Common myeloid progenitor, CD34-positive (primary cell): ENCODE measurements at regions of chr22 and their contacts with region 1.

Region 1: DNA sequence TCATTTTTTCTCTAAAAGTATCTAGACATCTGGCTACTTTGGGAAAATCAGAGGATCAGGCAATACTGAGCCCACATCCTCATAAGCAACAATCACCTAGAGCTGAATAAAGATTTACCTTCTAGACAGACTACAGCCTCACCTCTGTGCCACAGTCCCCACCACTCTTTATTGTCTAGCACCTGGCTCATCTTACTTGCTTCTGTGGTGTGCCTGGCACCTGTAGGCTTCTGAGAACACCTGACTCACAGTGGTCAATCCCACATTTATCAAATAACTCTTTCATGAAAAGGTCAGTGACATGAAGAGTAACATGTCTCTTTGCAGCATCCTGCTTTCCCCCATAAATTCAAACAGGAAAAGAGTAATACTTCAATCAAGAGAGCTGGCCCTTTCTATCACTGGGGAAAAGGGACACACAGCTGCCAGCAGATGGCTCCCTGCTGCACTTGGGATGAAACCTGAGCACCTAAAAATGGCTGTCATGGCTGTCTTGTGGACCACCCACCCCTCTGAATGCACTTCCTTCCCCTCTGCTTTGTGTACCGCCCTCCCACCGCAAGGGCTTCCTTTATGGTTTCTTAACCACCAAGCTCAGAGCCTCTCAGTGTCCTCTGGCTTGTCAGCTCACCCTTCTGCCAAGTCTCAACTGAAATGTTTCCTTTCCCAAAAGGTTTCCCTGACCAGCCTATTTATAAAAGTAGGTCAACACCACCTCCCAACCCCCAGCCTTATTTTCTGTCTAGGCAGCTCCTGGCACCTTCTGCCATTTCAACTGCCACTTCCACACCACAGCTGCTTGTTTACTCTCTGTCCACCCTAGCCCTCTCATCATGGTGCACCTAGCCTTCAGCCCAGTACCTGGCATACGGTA is 9.3 kb downstream of the TFIP11 start:
- DNase-seq: peak; percentile 95 to 97 (median 97)
- H3K4me3 ChIP-seq: peak overlapping the region in 6 of 7 experiments; percentile 1 to 55 (median 48)
- H3K27ac ChIP-seq: no peak overlapping the region
- H3K4me1 ChIP-seq: peaks cover 11 to 26% (median 22%) of the 10 kb centered on the region in 4 experiments
- H3K27me3 ChIP-seq: no peaks in the 10 kb centered on the region

Region 2: GRCh38 chr22:26470807-26471206 is 32.1 kb before region 1 on chr22:
- CTCF ChIA-PET with region 1: no interaction called
- POLR2A ChIA-PET with region 1: no interaction called
- DNase-seq: no peak
- H3K4me3 ChIP-seq: no peak overlapping the region
- H3K27ac ChIP-seq: no peak overlapping the region
- H3K4me1 ChIP-seq: peaks cover 0 to 6% (median 1%) of the 10 kb centered on the region in 4 experiments
- H3K27me3 ChIP-seq: no peaks in the 10 kb centered on the region

Region 3: GRCh38 chr22:26492220-26492619 is 10.7 kb before region 1 on chr22:
- CTCF ChIA-PET with region 1: interaction called, 19 read pairs
- POLR2A ChIA-PET with region 1: interaction called, 4 read pairs
- DNase-seq: no peak
- H3K4me3 ChIP-seq: no peak overlapping the region
- H3K27ac ChIP-seq: no peak overlapping the region
- H3K4me1 ChIP-seq: no peaks in the 10 kb centered on the region
- H3K27me3 ChIP-seq: no peaks in the 10 kb centered on the region

Region 4: GRCh38 chr22:26665813-26666231 is 162.9 kb after region 1 on chr22:
- CTCF ChIA-PET with region 1: interaction called, 33 read pairs
- POLR2A ChIA-PET with region 1: no interaction called
- DNase-seq: no peak
- H3K4me3 ChIP-seq: no peak overlapping the region
- H3K27ac ChIP-seq: no peak overlapping the region
- H3K4me1 ChIP-seq: peaks cover 4 to 17% (median 5%) of the 10 kb centered on the region in 4 experiments
- H3K27me3 ChIP-seq: no peaks in the 10 kb centered on the region